GM12878 (cell line): ENCODE measurements at regions of chr7 and their contacts with region 1.

Region 1: GRCh38 chr7:113159746-113160339 is 41.5 kb upstream of the SMIM30 start:
- DNase-seq: no peak
- ATAC-seq: peak; percentile 92
- H3K4me3 ChIP-seq: no peak overlapping the region
- H3K27ac ChIP-seq: no peak overlapping the region
- H3K4me1 ChIP-seq: no peaks in the 10 kb centered on the region
- H3K27me3 ChIP-seq: no peaks in the 10 kb centered on the region
- CTCF ChIP-seq: peak; percentile 58 to 71 (median 62); a peak in 5 of 6 replicates
- EP300 ChIP-seq: no peak
- POLR2A ChIP-seq: no peak
- RAD21 ChIP-seq: peak; percentile 44

Region 2: DNA sequence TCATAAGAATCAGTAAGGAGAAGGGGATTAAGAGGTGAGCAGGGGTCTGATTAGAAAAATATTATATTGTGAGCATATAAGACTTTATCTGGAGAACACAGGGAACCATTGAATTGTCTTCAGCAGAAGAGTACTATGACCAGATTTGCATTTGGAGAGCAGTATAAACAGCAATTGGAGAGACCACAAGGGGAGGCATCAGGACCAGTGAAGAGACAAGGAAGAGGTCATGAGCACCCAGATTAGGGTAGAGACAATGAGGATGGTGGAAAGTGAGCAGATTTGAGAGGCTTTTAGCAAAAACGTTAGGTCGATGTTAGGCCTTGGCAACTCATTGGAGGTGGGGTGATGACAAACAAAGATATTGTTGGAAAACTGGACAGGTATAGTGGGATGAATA is 28.5 kb before region 1 on chr7:
- CTCF ChIA-PET with region 1: interaction called, 13 read pairs
- POLR2A ChIA-PET with region 1: no interaction called
- RAD21 ChIA-PET with region 1: no interaction called
- SMC1A ChIA-PET with region 1: no interaction called
- in situ Hi-C with region 1: no loop called
- intact Hi-C with region 1: no loop called
- DNase-seq: no peak
- ATAC-seq: no peak
- H3K4me3 ChIP-seq: no peak overlapping the region
- H3K27ac ChIP-seq: no peak overlapping the region
- H3K4me1 ChIP-seq: no peaks in the 10 kb centered on the region
- H3K27me3 ChIP-seq: no peaks in the 10 kb centered on the region; a peak in 1 of 4 replicates
- CTCF ChIP-seq: no peak
- EP300 ChIP-seq: no peak
- POLR2A ChIP-seq: no peak
- RAD21 ChIP-seq: no peak

Region 3: DNA sequence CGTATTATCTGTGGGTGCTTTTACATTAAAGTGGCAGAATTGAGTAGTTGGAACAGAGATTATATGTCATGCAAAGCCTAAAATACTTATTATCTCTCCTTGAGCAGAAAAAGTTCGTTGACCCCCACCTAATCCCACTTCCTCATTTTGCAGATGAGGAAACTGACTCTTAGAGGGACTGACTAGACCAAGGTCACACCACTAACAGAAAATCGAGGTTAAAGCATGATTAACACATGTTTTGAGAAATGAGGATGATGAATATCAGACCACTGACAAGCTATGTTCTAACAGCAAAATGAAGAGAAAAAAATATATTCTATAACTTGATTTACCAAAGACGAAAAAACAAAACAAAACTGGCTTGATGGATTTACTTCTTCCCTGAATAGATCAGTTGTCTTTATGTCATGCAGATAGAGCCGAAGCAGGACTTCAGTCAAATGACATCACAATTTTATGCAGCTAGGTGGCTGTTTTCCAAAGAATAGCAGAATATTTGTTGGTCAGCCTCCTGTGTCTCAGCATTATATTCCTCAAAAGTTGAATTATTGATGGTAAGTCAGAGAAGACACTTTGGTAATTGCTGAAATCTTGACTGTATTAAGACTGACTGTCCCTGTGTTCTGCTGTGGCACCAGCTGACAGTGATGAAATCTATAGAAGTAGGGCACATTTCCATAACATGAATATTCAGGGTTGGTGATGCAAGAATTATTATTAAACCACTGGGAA is 17.3 kb before region 1 on chr7:
- CTCF ChIA-PET with region 1: interaction called, 32 read pairs
- POLR2A ChIA-PET with region 1: no interaction called
- RAD21 ChIA-PET with region 1: interaction called, 7 read pairs
- SMC1A ChIA-PET with region 1: interaction called, 8 read pairs
- in situ Hi-C with region 1: no loop called
- intact Hi-C with region 1: no loop called
- DNase-seq: peak; percentile 20
- ATAC-seq: peak; percentile 83
- H3K4me3 ChIP-seq: no peak overlapping the region
- H3K27ac ChIP-seq: no peak overlapping the region
- H3K4me1 ChIP-seq: peaks cover 6% of the 10 kb centered on the region; the same call in 1 of the 2 replicates
- H3K27me3 ChIP-seq: no peaks in the 10 kb centered on the region
- CTCF ChIP-seq: no peak
- EP300 ChIP-seq: peak; percentile 50 to 60; a peak in 2 of 4 replicates
- POLR2A ChIP-seq: no peak
- RAD21 ChIP-seq: no peak

Region 4: DNA sequence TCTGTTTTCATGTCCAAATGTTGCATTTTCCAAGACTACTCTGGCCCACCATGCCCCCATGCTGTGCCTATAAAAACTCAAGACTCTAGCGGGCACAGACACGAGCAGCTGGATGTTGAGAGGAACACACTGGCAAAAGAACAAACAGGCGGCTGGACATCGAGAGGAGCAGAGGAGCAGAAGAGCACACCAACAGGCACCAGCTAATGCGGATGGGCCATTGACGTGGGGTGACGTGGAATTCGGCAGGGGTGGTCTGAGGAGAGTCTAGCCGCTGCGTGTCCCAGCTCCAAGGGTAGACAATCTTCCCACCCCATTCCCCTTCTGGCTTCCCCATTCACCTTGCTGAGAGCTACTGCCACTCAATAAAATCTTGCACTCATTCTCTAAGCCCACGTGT is 12.9 kb after region 1 on chr7:
- CTCF ChIA-PET with region 1: interaction called, 10 read pairs
- POLR2A ChIA-PET with region 1: no interaction called
- RAD21 ChIA-PET with region 1: no interaction called
- SMC1A ChIA-PET with region 1: interaction called, 4 read pairs
- in situ Hi-C with region 1: no loop called
- intact Hi-C with region 1: no loop called
- DNase-seq: no peak
- ATAC-seq: no peak
- H3K4me3 ChIP-seq: no peak overlapping the region
- H3K27ac ChIP-seq: no peak overlapping the region
- H3K4me1 ChIP-seq: no peaks in the 10 kb centered on the region
- H3K27me3 ChIP-seq: no peaks in the 10 kb centered on the region
- CTCF ChIP-seq: no peak
- EP300 ChIP-seq: no peak
- POLR2A ChIP-seq: no peak
- RAD21 ChIP-seq: no peak

Region 5: DNA sequence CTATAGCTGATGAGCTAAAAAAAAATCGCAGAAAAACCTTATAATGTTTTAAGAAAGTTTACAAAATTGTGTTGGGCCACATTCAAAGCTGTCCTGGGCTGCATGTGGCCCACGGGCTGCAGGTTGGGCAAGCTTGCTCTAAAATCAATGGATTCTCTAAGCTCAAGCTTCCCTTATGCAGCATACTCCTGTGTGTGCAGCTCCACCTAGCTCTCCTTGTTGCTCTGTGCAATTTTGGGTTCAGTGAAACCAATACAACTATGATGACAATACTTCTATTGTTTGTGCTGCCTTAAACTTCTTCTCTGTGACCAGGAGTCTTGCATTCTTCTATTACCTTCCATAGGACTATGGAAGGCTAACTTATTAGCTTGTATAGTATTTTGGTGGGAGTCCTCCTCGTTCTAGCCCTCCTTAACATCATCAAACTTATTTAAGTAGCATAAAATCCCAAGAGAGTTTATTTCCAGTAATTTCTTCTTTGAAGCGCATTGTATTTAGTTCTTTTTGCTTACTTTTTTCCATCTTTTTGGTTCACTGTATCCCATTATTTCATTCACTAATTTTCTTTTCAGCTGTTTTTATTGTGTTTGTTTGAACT is 129.4 kb after region 1 on chr7:
- CTCF ChIA-PET with region 1: interaction called, 18 read pairs
- POLR2A ChIA-PET with region 1: no interaction called
- RAD21 ChIA-PET with region 1: interaction called, 8 read pairs
- SMC1A ChIA-PET with region 1: interaction called, 8 read pairs
- in situ Hi-C with region 1: no loop called
- intact Hi-C with region 1: loop called (anchors 5 kb)
- DNase-seq: no peak
- ATAC-seq: peak; percentile 87
- H3K4me3 ChIP-seq: no peak overlapping the region
- H3K27ac ChIP-seq: no peak overlapping the region
- H3K4me1 ChIP-seq: no peaks in the 10 kb centered on the region
- H3K27me3 ChIP-seq: no peaks in the 10 kb centered on the region
- CTCF ChIP-seq: peak; percentile 43 to 69 (median 59); a peak in 5 of 6 replicates
- EP300 ChIP-seq: no peak
- POLR2A ChIP-seq: no peak
- RAD21 ChIP-seq: peak; percentile 61